Ascending aorta (tissue), 2 donors: ENCODE measurements at regions of chr3 and their contacts with region 1.

Region 1: GRCh38 chr3:51995346-51996163 is at the start of gene RPL29:
- DNase-seq: peak; percentile 56 to 94
- H3K4me3 ChIP-seq: peak within 1 kb of the TSS; percentile 61 to 93
- H3K27ac ChIP-seq: peak within 1 kb of the TSS; percentile 85 to 93
- H3K4me1 ChIP-seq: peaks cover 6 to 9% of the 10 kb centered on the region in 2 donors
- H3K27me3 ChIP-seq: no peaks in the 10 kb centered on the region
- CTCF ChIP-seq: peak in 1 of 3 experiments; percentile 22
- total RNA-seq, gene RPL29: 1,224 TPM

Region 2: GRCh38 chr3:51353691-51354090 is 641.9 kb before region 1 on chr3:
- intact Hi-C with region 1: no loop called
- DNase-seq: no peak
- H3K4me3 ChIP-seq: no peak overlapping the region
- H3K27ac ChIP-seq: no peak overlapping the region
- H3K4me1 ChIP-seq: no peaks in the 10 kb centered on the region
- H3K27me3 ChIP-seq: no peaks in the 10 kb centered on the region
- CTCF ChIP-seq: no peak

Region 3: DNA sequence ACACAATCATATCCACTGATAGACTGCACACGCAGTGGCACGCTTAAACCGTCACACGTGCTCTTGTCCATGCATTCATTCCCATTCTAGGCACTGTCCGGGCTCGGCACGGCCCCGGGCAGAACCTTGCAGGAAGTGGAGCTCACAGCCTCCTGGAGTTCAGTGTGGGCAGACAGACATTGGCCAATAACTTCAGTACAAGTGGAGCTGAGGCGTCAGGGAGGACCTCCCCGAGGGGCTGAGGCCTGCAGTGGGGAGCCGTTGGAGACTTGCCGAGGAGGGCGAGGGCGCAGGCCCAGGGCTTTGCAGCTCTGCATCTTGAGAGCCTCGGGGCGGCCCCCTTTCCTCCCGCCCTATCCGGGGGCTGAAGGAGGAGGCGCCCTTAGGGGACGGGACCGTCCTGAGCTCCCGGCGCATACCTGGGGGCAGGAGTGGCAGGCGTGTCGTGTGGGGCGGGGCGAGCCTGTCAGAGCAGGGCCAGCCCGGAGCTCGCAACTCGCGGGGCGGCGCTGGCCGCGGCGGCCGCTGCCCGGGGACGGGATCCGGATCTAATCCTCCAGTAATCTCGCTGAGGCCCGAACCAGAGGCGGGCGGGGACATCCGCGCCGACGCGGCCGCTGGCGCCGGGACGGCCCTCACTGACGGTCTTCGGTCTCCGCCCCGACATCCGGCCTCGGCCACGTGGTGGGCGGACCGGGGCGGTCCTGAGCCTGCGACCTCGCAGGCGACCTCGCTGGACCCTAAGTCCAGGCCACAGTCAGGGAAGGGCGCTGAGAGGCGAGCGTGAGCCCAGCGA is 12.6 kb before region 1 on chr3 and contains the start of gene ACY1:
- intact Hi-C with region 1: loop called (anchors 1 kb)
- DNase-seq: peak; percentile 44 to 95
- H3K4me3 ChIP-seq: peak within 1 kb of the TSS; percentile 77 to 93
- H3K27ac ChIP-seq: peak within 1 kb of the TSS; percentile 93 to 97
- H3K4me1 ChIP-seq: peaks cover 16 to 19% of the 10 kb centered on the region in 2 donors
- H3K27me3 ChIP-seq: no peaks in the 10 kb centered on the region
- CTCF ChIP-seq: no peak
- total RNA-seq, gene ACY1: 94.0 TPM

Region 4: DNA sequence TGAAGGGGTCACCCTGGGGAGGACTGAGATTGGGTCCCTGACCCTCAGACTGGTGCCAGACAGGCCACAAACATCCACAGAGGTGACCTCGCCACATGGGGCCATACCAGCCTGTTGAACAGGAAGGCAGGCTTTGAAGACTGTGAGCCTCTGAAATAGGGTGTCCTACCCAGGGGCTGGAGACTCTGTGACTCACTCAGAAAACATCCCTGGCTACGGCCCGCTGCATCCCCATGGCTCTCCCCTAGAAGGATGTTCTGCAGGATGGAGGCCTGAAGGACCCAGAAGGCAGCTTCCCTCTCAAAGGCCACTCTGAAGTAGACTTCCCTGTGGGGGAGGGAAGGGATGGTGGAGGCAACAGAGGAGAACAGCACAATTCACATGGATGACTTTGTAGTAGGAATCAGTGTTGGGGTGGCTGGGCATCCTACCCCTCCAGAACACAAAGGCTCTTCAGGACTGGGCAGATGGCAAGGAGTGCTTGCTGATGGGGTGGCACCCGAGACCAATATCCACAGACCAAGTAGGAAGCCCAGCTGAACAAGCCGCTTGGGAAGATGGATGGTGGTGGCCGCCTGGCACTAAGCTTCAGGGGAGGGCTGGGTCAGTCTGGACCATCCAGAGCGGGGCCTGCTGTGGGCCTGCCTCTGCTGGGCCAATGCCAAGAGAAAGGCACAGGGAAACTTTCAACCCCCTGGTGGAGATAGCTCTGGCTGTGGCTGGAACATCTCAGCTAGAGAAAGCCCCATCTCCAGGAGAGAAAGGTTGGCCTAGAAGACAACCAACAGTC is 98.4 kb after region 1 on chr3:
- intact Hi-C with region 1: no loop called
- DNase-seq: no peak
- H3K4me3 ChIP-seq: no peak overlapping the region
- H3K27ac ChIP-seq: no peak overlapping the region
- H3K4me1 ChIP-seq: peaks cover 30 to 31% of the 10 kb centered on the region in 2 donors
- H3K27me3 ChIP-seq: no peaks in the 10 kb centered on the region
- CTCF ChIP-seq: no peak